ENCODE measurements at regions of chr19 and their contacts with region 1.

Region 1: DNA sequence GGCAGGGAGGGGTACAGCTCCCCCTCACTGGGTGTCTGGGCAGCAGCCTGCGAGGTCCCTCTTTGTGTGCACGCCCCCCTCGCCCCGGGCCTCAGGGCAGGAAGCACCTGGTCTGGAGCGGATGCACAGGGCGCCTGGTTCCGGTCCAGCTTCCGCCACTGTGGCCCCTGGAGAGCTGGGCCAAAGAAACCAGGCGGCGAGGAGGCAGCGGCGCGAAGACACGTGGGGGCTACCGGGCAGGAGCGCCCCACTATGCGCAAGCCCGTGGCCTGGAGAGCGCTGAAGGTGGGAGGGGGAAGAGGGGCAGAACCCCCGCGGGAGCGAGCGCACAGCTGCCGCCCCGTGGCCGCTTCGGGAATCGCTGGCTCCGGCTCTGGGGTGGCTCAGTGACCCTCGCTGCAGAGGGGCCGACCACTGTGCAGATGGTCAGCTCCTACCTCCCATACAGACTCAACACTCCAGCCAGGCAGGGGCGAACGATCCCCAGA is 1.7 kb upstream of the LYL1 start:
- DNase-seq: no peak
- ATAC-seq: peak; percentile 45
- H3K4me3 ChIP-seq: peak overlapping the region; percentile 61
- H3K27ac ChIP-seq: peak overlapping the region; percentile 90
- H3K4me1 ChIP-seq: peaks cover 41% of the 10 kb centered on the region
- H3K27me3 ChIP-seq: no peaks in the 10 kb centered on the region
- CTCF ChIP-seq: peak; percentile 79 to 99 (median 96)
- EP300 ChIP-seq: no peak
- POLR2A ChIP-seq: peak; percentile 72
- RAD21 ChIP-seq: peak; percentile 45; the same call in 1 of the 2 replicates

Region 2: DNA sequence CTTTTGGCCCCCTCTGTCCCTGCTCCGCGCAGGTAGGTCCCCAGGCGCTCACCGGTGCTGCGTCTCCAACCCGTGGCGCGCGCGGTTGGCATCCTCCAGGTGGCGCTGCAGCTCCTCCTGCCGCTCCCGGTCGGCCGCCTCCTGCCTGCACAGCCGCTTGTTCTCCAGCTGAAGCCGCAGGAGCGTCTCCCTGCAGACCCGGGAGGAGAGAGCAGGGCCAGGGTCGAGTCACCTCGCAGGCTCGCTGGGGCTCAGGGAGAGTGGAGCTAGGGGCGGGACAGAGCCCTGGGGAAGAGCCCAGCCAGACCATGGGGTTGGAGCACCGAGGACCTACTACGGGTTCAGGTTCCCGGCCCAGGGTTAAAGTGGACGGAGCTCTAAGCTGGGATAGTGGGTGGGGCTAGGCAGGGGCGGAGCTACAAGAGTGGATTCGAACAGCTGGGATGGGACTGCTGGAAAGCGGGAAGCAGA is 338.3 kb before region 1 on chr19:
- CTCF ChIA-PET with region 1: no interaction called
- POLR2A ChIA-PET with region 1: no interaction called
- RAD21 ChIA-PET with region 1: no interaction called
- SMC1A ChIA-PET with region 1: no interaction called
- in situ Hi-C with region 1: no loop called
- intact Hi-C with region 1: no loop called
- DNase-seq: no peak
- ATAC-seq: peak; percentile 94
- H3K4me3 ChIP-seq: peak overlapping the region; percentile 49; the same call in 1 of the 2 replicates
- H3K27ac ChIP-seq: no peak overlapping the region
- H3K4me1 ChIP-seq: no peaks in the 10 kb centered on the region; the same call in 1 of the 2 replicates
- H3K27me3 ChIP-seq: no peaks in the 10 kb centered on the region; a peak in 1 of 4 replicates
- CTCF ChIP-seq: peak; percentile 80 to 96 (median 86)
- EP300 ChIP-seq: no peak
- POLR2A ChIP-seq: no peak
- RAD21 ChIP-seq: peak; percentile 65

Region 3: DNA sequence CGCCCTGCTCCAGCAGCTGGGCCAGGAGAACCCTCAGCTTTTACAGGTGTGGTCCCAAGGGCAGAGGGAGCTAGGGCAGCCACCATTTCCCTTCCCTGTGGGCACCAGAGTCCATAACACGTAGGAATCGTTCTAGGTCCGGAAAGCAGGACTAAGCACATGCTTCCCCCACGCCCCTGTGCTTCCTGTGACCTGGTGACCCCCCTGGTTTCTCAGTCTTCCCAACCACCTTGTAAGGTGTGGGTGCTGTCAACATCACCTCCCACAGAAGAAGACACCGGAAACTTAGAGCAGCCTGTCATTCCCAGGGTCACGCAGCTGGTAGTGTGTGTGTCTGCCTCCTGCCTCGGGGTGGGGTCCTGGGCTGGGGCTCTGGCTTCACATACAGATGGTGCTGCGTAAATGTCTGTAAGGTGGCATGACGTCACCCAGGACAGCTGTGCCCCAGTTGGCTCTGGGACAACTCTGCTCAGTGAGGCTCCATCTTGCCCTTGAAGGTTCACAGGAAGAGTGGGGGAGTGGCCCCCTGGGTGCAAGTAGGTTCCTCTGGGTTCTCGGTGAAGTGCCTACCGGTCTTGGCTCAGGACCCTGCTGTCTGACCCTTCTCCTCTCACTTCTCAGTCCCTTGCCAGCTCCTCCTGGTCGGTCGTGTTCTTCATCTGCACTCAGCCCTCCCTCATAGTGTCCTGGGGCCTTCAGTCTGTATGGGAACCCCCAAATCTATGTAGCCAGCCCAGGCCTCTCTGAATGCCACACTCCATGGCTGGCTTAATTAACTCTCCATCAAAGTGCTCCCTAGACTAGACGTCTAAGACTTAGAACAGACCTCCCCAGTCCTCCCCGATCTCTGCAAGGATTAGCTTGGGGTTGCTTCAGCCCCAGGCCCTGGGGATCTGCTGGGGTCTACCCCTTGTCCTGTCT is 154.8 kb before region 1 on chr19:
- CTCF ChIA-PET with region 1: no interaction called
- POLR2A ChIA-PET with region 1: no interaction called
- RAD21 ChIA-PET with region 1: no interaction called
- SMC1A ChIA-PET with region 1: no interaction called
- in situ Hi-C with region 1: no loop called
- intact Hi-C with region 1: no loop called
- DNase-seq: no peak
- ATAC-seq: no peak
- H3K4me3 ChIP-seq: no peak overlapping the region
- H3K27ac ChIP-seq: no peak overlapping the region
- H3K4me1 ChIP-seq: peaks cover 13% of the 10 kb centered on the region
- H3K27me3 ChIP-seq: no peaks in the 10 kb centered on the region
- CTCF ChIP-seq: no peak
- EP300 ChIP-seq: no peak
- POLR2A ChIP-seq: peak; percentile 16; the same call in 1 of the 2 replicates
- RAD21 ChIP-seq: no peak

Region 4: DNA sequence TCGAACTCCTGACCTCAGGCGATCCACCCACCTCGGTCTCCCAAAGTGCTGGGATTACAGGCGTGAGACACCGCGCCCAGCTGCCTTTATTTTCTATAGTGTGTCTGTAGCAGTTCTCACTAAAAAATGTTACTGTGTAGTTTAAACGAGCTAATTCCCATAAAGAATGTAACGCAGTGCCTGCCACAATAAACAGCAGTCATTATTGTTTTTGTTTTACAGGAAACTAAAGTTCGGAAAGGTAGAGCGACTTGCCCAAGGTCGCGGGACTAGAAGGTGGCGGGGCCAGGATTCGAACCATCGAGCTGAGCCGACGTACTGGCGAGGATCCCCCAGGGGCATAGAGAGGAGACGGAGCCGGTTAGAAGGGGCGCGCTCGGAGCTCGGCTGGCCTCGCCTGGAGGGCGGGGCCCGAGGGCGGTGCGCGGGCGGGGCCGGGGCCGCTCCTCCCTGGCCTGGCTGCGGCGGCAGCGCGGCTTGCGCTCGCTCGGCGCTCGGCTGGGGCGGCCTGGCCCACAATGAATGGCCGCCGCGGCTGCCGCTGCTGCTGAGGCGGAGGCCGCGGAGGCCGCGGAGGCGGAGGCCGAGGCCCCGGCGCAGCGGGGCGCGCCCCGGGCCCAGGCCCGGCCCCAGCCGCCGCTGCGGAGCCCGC is 13.5 kb after region 1 on chr19 and contains the start of gene NACC1:
- CTCF ChIA-PET with region 1: interaction called, 13 read pairs
- POLR2A ChIA-PET with region 1: interaction called, 7 read pairs
- RAD21 ChIA-PET with region 1: interaction called, 6 read pairs
- SMC1A ChIA-PET with region 1: interaction called, 6 read pairs
- in situ Hi-C with region 1: no loop called
- intact Hi-C with region 1: no loop called
- DNase-seq: no peak
- ATAC-seq: peak; percentile 82
- H3K4me3 ChIP-seq: peak within 1 kb of the TSS; percentile 98
- H3K27ac ChIP-seq: peak within 1 kb of the TSS; percentile 75
- H3K4me1 ChIP-seq: peaks cover 36% of the 10 kb centered on the region
- H3K27me3 ChIP-seq: no peaks in the 10 kb centered on the region
- CTCF ChIP-seq: no peak
- EP300 ChIP-seq: no peak
- POLR2A ChIP-seq: peak; percentile 66
- RAD21 ChIP-seq: 0 out of 2 replicates have a peak, but pooled peaks have one; percentile 0
- polyA plus RNA-seq, gene NACC1: 0.18 to 0.27 TPM

Measured in GM12878 (cell line).